ENCODE measurements at regions of chr9 and their contacts with region 1.

Region 1: DNA sequence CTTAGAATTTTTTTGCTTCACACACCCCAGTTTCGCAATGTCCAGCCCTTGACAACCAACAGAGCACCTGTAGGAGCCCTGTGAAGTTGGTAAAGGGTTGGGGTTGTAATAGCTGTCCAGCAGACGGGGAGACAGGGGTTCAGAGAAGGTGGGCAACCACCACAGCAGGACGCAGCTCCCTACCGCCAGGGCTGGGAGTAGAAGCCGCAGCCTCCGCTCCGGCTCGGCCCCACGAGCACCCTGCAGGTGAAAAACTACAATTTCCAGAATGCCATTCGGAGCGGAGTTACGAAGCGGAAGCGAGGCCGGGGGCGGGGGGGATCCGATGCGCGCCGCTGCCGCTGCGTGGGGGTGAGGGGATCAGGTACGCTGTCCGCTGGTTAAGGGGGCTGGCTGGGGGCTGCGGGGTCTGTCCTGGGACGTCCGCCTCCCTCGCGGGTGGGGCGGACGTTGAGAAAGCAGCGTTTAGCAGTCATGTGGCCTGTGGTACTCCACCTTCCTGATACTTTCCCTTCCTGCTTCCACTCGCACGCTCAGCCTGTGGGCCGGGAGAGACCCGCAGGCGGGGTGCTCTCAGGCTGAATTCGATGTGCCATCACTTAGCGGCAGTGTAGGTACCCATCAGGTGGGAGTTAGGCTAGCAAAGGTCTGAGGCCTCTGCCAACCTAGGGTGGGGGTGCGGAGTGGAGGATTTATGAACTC is at the start of gene TRMT10B:
- DNase-seq: peak; percentile 68 to 71
- ATAC-seq: peak; percentile 93 to 97 (median 96)
- H3K4me3 ChIP-seq: peak within 1 kb of the TSS; percentile 45 to 95 (median 72)
- H3K27ac ChIP-seq: peak within 1 kb of the TSS in 9 of 10 donors; percentile 51 to 90 (median 84)
- H3K4me1 ChIP-seq: peaks cover 0 to 14% (median 9%) of the 10 kb centered on the region in 9 donors
- H3K27me3 ChIP-seq: no peaks in the 10 kb centered on the region
- CTCF ChIP-seq: no peak
- total RNA-seq, gene TRMT10B: 2.6 to 6.5 (median 3.6) TPM

Region 2: DNA sequence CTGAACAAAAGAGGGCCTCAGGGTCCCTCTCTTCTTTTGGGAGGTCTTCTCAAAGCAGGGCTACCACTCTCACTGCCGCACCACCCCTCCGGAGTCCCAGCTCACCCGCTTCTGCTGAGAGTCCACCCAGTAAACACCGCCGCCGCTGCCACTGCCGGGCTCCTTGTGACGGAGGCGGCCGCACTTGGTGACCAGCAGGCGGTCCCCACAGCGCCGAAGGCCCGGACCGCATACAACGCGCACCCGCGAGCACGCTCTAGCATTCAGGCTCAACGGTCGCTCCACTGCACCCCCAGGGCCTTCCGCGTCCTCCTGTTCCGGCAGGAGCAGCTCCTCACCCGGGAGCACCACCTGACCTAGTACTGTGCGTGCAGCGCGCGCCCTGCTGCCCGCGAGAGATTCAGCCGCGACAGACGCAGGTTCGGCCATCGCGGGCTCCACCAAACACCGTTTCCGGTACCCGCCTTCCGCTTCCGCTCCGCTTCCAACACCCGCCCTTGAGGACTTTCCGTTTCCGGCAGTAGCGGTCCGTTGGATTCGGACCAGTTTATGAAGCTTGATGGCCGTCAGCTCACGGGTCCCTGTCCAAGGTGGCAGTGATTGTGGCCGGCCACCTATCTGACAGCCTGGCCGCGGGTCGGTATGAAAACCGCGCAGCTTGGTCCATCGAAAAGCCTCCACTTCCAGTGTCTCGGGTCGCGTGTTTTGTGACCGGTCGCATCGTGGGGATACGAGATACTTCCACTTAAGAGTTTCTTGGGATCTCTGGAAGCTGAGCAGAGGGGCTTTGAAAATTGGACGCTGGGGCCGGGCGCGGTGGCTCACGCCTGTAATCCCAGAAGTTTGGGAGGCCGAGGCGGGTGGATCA is 31.2 kb after region 1 on chr9 and contains the start of gene EXOSC3:
- intact Hi-C with region 1: no loop called
- DNase-seq: peak; percentile 88 to 92
- ATAC-seq: peak; percentile 94 to 98 (median 98)
- H3K4me3 ChIP-seq: peak within 1 kb of the TSS; percentile 57 to 99 (median 89)
- H3K27ac ChIP-seq: peak within 1 kb of the TSS in 9 of 10 donors; percentile 72 to 89 (median 79)
- H3K4me1 ChIP-seq: peaks cover 0 to 28% (median 25%) of the 10 kb centered on the region in 9 donors
- H3K27me3 ChIP-seq: peaks cover 0 to 14% (median 6%) of the 10 kb centered on the region in 7 donors
- CTCF ChIP-seq: peak in 3 of 9 donors; percentile 22 to 34 (median 23)
- total RNA-seq, gene EXOSC3: 7.5 to 15.2 (median 12.8) TPM

Region 3: DNA sequence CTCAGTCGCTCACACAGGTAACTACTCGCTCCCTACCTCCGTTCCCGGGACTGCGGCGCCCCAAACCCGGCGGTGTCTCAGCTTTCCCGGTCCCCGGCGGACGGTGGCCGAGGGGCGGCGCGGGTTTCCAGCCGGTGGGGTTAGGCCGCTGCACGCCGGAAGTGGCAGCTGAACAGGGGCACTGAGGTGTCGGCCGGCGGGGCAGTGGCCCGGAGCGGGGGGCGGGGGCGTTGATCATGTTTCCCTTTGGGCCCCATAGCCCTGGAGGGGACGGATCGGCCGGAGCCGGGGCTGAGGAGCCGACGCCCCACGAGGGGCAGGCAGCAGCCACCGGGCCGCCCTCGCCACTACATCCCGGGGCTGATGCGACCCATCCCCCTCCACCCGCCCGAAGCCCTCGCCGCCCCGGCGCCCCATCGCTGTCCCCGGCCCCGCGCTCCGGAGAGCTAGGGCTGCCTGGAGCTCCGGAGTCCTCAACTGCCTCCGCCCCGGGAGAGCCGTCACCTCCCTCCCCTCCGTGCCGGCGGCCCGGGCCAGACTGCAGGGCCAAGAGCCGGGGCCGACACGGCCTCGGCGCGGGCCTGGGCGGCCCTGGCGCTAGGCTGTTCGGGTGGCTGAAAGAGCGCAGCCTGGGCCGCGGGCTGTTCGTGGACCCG is 47.1 kb after region 1 on chr9 and contains the start of gene DCAF10:
- intact Hi-C with region 1: loop called in 3 of 10 experiments (anchors 5 to 10 kb)
- DNase-seq: peak; percentile 87 to 88
- ATAC-seq: peak; percentile 95 to 97 (median 97)
- H3K4me3 ChIP-seq: peak within 1 kb of the TSS; percentile 78 to 99 (median 96)
- H3K27ac ChIP-seq: peak within 1 kb of the TSS; percentile 18 to 94 (median 88)
- H3K4me1 ChIP-seq: peaks cover 8 to 39% (median 35%) of the 10 kb centered on the region in 9 donors
- H3K27me3 ChIP-seq: no peaks in the 10 kb centered on the region
- CTCF ChIP-seq: no peak
- total RNA-seq, gene DCAF10: 16.1 to 23.4 (median 19.6) TPM

Region 4: DNA sequence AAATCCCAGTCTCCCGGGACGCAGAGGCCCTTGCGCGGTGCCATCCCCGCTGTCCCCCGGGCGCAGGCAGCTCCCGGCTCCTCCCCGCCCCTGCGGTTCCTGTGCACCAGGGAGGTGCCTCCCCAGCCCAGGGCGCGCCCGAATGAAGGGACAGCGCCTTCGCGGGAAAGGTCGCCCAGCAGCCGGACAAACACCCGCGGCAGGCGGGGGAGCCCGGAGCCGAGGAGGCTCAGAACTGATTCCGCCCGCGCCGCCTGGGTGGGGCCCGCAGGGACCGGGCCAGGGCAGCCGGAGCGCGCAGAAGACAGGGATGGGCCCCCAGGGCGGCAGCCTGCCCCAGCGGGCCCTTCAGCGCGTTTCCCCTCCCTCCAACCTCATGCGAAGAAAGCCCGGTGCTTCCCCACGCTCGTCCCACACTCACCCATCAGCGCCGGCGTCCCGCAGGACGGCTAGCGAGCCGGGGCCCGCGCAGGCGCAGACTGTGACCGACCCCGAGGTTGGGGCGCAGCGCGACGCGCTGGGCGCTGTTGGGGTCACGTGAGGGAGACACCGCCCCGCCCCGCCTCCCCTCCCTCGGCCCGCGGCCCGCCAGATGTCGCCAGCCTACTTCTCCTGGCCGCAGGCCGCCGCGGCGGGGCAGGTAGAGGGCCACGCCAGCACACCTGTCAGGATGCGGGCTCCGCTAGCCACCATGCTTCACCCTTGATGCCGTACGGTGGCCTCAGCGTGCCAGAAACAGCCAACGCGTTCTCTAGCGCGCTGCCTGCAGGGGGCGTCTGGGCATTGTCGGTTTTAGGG is 150.2 kb after region 1 on chr9 and contains the start of gene SLC25A51:
- intact Hi-C with region 1: loop called in 1 of 10 experiments (anchors 5 kb)
- DNase-seq: peak; percentile 96
- ATAC-seq: peak; percentile 91 to 96 (median 94)
- H3K4me3 ChIP-seq: peak within 1 kb of the TSS; percentile 71 to 100 (median 87)
- H3K27ac ChIP-seq: peak within 1 kb of the TSS; percentile 19 to 92 (median 88)
- H3K4me1 ChIP-seq: peaks cover 4 to 32% (median 26%) of the 10 kb centered on the region in 9 donors
- H3K27me3 ChIP-seq: no peaks in the 10 kb centered on the region
- CTCF ChIP-seq: peak; percentile 81 to 98 (median 93)
- total RNA-seq, gene SLC25A51: 16.3 to 26.5 (median 21.3) TPM

Region 5: DNA sequence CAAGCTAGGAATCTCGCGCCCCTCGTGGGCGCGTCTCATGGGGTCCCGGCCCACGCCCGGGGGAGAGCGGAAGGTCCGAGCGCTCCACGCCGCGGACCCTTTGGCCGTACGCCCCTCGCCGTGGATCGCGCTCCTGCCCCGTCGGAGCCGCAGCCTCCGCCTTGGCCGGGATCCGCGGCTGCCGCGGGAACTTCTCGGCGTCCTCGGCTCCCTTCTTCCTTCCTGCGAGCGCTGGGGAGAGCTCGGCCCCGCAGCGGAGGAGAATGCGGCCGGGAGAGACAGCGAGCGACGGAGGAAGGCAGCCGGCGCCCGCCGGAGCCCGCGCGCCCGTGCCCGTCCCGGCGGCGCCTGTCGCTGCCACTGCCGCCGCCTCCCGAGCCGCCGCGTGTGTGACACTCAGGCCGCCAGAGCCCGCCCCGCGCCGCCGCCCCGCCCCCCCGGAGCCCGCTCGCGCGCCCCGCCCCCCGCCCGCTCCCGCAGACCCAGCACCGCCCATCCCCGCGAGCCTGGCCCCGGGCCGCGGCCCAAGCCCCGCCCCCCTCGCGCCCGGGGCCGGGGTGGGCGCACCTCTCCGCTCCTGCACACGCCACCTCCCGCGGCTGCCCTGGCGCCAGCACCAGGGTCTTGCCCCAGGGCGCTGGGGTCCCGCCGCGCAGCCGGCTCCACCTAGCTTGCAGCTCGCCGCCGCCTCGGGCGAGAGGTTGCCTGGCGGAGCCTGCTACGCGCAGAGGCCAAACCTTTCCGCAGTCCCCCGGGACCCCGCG is 315.4 kb after region 1 on chr9 and contains the start of gene SHB:
- intact Hi-C with region 1: no loop called
- DNase-seq: peak; percentile 82 to 88
- ATAC-seq: peak; percentile 68 to 87 (median 76)
- H3K4me3 ChIP-seq: peak within 1 kb of the TSS; percentile 78 to 99 (median 95)
- H3K27ac ChIP-seq: peak within 1 kb of the TSS; percentile 87 to 99 (median 98)
- H3K4me1 ChIP-seq: peaks cover 3 to 57% (median 44%) of the 10 kb centered on the region in 9 donors
- H3K27me3 ChIP-seq: peaks cover 0 to 16% (median 0%) of the 10 kb centered on the region in 7 donors
- CTCF ChIP-seq: peak in 5 of 9 donors; percentile 2 to 47 (median 25)
- total RNA-seq, gene SHB: 13.9 to 26.6 (median 18.0) TPM

Region 6: DNA sequence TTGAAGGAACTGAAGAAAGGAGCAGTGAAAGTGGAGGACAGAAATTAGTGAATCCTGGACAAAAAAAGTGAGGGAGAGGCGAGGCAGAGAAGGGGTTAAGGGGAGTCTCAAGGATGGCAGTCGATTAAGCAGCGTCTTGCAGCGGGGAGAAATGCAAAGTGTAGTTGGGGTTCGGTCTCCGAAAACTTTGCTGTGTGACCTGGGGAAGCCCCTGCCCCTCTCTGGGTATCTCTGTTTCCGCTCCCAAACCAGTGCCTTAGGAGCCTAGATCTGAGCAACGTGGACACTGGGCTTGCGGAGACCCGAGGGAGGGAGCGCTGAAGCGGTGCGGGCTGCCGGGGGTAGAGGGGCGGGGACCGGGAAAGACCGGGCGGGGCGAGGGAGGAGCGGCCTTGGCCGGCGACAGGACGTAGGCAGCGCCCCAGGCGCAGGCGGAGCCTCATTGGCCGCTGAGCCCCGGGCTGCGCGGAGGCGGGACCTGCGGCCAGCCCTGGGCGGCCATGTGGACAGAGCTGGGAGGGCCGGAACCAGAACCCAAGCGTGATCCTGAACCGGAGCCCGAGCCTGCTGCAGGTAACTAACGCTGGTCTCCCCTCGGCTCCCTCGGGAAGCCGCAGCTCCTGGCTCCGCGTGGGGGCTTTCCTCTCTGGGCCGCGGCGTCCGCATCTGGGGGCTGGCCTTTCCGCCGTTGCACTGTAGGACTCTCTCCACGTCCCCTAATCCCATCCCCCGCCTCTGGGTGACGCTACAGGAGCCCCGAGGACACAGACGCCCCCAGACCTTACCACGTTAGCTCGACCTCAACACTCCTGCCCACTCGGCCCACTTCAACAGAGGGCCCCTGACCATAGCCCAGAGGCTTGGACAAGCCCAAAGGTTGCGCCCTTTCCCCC is 638.8 kb after region 1 on chr9 and contains the start of gene ALDH1B1:
- intact Hi-C with region 1: loop called in 2 of 10 experiments (anchors 10 kb)
- DNase-seq: peak; percentile 80 to 87
- ATAC-seq: peak; percentile 98 to 99 (median 99)
- H3K4me3 ChIP-seq: peak within 1 kb of the TSS; percentile 54 to 89 (median 76)
- H3K27ac ChIP-seq: peak within 1 kb of the TSS in 8 of 10 donors; percentile 11 to 79 (median 54)
- H3K4me1 ChIP-seq: peaks cover 0 to 28% (median 15%) of the 10 kb centered on the region in 9 donors
- H3K27me3 ChIP-seq: peaks cover 0 to 3% (median 0%) of the 10 kb centered on the region in 7 donors
- CTCF ChIP-seq: peak in 5 of 9 donors; percentile 8 to 27 (median 22)
- total RNA-seq, gene ALDH1B1: 12.1 to 30.2 (median 18.9) TPM

Measured in heart right ventricle (tissue), 16 donors.